Panc1 (cell line): ENCODE measurements at regions of chr3 and their contacts with region 1.

Region 1: DNA sequence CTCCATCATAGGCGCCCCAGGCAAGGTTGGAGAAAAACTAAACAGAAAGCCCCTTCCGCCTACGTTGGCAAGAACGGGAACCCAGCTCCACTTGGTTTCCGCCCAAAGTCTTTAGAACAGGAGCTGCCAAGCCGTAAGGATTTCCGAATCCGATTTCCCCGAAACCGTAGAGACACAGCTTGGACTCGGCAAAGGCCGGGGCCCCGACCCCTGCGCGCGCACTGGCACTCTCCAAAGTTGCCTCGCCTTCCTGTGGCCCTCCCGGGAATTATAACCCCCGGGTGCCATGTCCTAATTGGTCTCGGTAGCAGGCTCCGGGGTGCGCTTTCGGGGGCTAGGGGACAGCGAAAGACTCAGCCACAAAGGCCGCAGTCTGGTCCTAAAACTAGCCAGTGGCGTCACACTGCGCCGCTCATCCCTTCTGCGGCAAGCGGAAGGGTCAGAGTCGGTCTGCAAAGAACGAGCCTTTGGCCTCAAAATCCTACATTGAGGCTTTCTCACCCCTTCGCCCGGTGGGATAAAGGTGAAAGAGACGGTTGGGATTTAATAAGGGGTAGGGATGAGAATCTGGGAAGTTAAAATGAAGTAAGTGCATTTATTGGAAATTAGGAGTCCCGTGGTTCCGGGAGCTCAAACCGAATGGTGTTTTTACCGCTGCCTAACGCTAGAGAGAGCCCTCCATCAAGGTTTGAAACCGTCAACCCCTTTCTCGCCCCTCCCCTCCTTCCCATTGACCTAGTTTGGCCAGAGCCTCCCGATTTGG is 6.8 kb downstream of the BCL6 start:
- DNase-seq: peak; percentile 88
- ATAC-seq: peak; percentile 75
- H3K4me3 ChIP-seq: peak overlapping the region; percentile 59 to 94
- H3K27ac ChIP-seq: peak overlapping the region; percentile 79
- H3K4me1 ChIP-seq: peaks cover 45% of the 10 kb centered on the region
- H3K27me3 ChIP-seq: no peaks in the 10 kb centered on the region
- CTCF ChIP-seq: peak; percentile 92

Region 2: DNA sequence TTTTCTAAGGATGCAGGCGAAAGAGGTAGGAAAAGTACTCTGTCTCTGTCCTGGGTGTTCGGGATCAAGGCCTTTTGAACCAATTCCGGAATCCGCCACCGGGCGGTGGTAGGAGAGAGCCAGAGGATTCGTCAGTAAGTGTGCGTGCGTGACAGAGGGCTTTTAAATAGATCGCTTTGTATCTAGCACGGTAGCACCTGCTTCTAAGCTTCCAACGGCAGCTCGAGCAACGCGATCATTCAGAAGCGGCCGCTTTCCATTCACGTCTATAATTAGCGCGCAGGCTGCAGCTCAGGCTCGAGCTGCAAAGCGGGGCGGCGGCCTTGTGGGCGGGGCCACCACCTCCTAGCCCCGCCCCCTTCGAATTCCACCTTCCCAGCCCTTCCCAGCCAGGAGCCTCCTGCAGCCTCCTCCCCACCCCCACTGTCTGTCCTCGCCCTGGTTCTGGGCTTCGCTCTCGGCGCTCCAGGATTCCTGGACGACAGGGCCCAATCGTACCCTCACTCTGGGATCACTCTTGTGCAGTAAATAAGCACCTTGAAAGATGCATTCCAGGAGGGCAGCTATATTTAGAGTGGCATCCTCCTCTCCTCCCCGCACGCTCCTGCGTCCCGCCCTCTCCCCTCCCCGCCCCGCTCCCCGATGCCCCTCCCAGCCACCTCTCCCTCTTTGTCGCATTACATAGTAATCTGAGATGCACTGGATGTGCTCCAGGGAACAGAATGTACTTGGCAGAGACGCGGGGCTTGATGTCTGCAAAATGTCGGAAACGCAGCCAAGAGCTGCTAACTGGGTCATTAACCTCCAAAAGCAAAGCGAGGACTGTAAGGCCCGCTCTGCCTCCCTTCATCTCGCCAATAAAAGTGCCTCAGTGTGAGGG is 1209.1 kb after region 1 on chr3:
- CTCF ChIA-PET with region 1: interaction called, 57 read pairs
- POLR2A ChIA-PET with region 1: interaction called, 6 read pairs
- in situ Hi-C with region 1: loop called (anchors 10 kb)
- intact Hi-C with region 1: no loop called
- DNase-seq: peak; percentile 88
- ATAC-seq: peak; percentile 88
- H3K4me3 ChIP-seq: peak overlapping the region; percentile 49 to 60
- H3K27ac ChIP-seq: peak overlapping the region; percentile 89
- H3K4me1 ChIP-seq: peaks cover 39% of the 10 kb centered on the region
- H3K27me3 ChIP-seq: no peaks in the 10 kb centered on the region
- CTCF ChIP-seq: peak; percentile 72

Region 3: GRCh38 chr3:189148081-189148507 is 1409.6 kb after region 1 on chr3:
- CTCF ChIA-PET with region 1: no interaction called
- POLR2A ChIA-PET with region 1: no interaction called
- in situ Hi-C with region 1: loop called (anchors 10 kb)
- intact Hi-C with region 1: loop called (anchors 2 kb)
- DNase-seq: no peak
- ATAC-seq: peak; percentile 83
- H3K4me3 ChIP-seq: no peak overlapping the region
- H3K27ac ChIP-seq: no peak overlapping the region
- H3K4me1 ChIP-seq: peaks cover 4% of the 10 kb centered on the region; the same call in 1 of the 2 replicates
- H3K27me3 ChIP-seq: peaks cover 10% of the 10 kb centered on the region; the same call in 1 of the 2 replicates
- CTCF ChIP-seq: peak; percentile 88

Region 4: DNA sequence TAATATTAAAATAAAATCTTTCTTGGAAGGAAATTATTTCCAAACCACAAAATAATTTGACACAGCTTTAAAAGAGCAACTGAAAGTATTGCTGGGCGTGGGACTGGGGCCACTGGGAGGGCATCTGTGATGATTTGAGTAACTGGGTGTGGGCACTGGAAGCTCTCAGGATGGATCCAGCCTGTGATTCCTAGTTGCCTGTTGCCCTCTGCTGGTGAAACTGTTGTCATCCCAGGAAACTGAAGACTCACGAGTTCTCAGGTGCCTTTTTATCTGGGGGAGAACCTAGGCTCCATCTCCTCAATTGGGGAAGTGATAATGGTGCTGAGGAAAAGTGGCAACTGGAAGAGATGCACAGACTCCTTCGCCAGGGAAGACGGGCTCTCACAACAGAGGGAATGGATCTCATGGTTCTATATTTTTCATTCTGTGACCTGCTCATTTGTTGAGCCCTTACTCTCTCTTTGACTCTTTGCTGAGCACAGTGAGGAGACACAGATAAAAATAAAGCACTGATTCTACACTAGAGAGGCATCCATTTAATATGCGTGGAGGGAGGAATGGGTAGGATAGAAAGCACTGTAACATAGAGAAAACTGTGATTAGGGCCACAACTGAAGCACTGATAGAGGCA is 1494.8 kb after region 1 on chr3:
- CTCF ChIA-PET with region 1: no interaction called
- POLR2A ChIA-PET with region 1: no interaction called
- in situ Hi-C with region 1: no loop called
- intact Hi-C with region 1: loop called (anchors 5 kb)
- DNase-seq: peak; percentile 18
- ATAC-seq: peak; percentile 96
- H3K4me3 ChIP-seq: no peak overlapping the region
- H3K27ac ChIP-seq: no peak overlapping the region
- H3K4me1 ChIP-seq: no peaks in the 10 kb centered on the region
- H3K27me3 ChIP-seq: no peaks in the 10 kb centered on the region; the same call in 1 of the 2 replicates
- CTCF ChIP-seq: peak; percentile 89